ENCODE measurements at regions of chr17 and their contacts with region 1.

Region 1: DNA sequence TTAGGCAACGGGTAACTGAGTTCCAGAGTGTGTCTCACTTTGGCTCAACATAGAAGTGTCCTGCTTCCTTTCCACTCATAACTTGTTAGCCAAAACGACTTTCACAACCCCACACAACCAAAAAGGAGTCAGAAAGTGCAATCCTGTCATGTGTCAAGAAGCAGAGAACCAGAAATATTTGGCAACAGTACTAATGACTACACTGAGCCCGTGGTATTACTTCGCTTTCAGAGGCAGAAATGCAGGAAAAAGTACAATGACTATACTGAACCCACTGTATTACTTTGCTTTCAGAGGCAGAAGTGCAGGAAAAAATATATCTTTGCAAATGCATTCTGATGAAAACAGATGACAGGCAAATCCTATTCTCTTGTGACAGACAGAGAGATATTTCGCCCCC is 484.6 kb downstream of the KIF2B start:
- DNase-seq: no peak
- H3K4me3 ChIP-seq: no peak overlapping the region
- H3K27ac ChIP-seq: no peak overlapping the region
- H3K4me1 ChIP-seq: no peaks in the 10 kb centered on the region
- H3K27me3 ChIP-seq: no peaks in the 10 kb centered on the region
- CTCF ChIP-seq: no peak
- EP300 ChIP-seq: no peak
- POLR2A ChIP-seq: no peak

Region 2: GRCh38 chr17:54220829-54221228 is 86.5 kb before region 1 on chr17:
- in situ Hi-C with region 1: loop called in 1 of 4 experiments (anchors 25 kb)
- intact Hi-C with region 1: no loop called
- DNase-seq: no peak
- H3K4me3 ChIP-seq: no peak overlapping the region
- H3K27ac ChIP-seq: no peak overlapping the region
- H3K4me1 ChIP-seq: no peaks in the 10 kb centered on the region
- H3K27me3 ChIP-seq: no peaks in the 10 kb centered on the region
- CTCF ChIP-seq: no peak
- EP300 ChIP-seq: no peak
- POLR2A ChIP-seq: no peak

Region 3: GRCh38 chr17:54235571-54235970 is 71.8 kb before region 1 on chr17:
- in situ Hi-C with region 1: no loop called
- intact Hi-C with region 1: no loop called
- DNase-seq: no peak
- H3K4me3 ChIP-seq: no peak overlapping the region
- H3K27ac ChIP-seq: no peak overlapping the region
- H3K4me1 ChIP-seq: no peaks in the 10 kb centered on the region
- H3K27me3 ChIP-seq: no peaks in the 10 kb centered on the region
- CTCF ChIP-seq: no peak
- EP300 ChIP-seq: no peak
- POLR2A ChIP-seq: no peak

Measured in transverse colon (tissue), 4 donors.